ENCODE measurements at regions of chr19 and their contacts with region 1.

Region 1: DNA sequence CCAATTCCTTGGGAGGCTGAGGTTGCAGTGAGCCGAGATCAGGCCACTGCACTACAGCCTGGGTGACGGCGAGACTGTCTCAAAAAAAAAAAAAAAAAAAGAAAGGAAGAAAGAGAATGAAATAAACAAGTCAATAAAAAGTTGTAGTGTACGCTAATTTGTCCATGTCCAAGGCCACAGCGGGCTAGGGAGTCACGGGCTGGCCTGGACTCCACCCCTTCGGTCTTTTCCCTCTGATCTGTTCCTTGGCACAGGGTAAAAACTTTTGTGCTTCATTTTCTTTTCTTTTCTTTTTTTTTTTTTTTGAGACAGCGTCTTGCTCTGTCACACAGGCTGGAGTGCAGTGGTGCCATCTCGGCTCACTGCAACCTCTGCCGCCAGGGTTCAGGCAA is 19.4 kb upstream of the MKNK2 start:
- DNase-seq: peak; percentile 56
- H3K4me3 ChIP-seq: no peak overlapping the region
- H3K27ac ChIP-seq: peak overlapping the region; percentile 60
- H3K4me1 ChIP-seq: peaks cover 8% of the 10 kb centered on the region
- H3K27me3 ChIP-seq: no peaks in the 10 kb centered on the region
- CTCF ChIP-seq: no peak

Region 2: GRCh38 chr19:1864481-1865175 is 205.8 kb before region 1 on chr19:
- intact Hi-C with region 1: no loop called
- DNase-seq: peak; percentile 75
- H3K4me3 ChIP-seq: peak overlapping the region; percentile 72
- H3K27ac ChIP-seq: peak overlapping the region; percentile 91
- H3K4me1 ChIP-seq: peaks cover 21% of the 10 kb centered on the region
- H3K27me3 ChIP-seq: no peaks in the 10 kb centered on the region
- CTCF ChIP-seq: peak; percentile 90

Region 3: DNA sequence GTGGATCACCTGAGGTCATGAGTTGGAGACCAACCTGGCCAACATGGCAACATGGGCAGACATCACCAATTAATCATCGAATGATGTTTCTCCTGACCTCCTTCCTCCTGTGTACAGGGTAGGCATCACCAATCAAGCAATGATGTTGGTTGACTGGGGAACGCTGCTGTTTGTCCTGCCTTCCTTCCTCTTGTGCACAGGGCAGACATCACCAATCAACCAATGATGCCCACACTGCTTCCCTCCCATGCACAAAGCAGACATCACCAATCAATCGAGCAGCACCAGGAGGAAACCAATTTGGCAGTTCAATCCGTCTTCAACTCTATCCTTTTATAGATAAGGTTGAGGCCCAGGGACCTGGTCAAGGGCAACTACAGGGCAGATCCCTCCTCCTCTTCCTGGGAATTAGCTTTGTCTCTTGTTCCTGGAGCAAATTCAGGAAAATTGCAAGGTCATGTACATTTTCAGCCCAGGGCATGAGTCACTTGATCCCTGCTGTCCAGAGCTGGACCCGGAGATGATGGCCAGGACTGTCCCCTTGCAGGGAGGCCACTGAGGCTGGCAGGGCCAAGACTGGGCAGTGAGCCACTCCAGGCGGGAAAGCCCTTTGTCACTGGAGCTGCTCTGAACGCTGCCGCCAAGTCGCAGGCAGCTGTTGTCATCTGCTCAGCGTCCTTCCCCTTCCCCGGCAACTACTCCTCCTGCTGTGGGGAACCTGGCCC is 134.8 kb before region 1 on chr19:
- intact Hi-C with region 1: loop called (anchors 10 kb)
- DNase-seq: no peak
- H3K4me3 ChIP-seq: no peak overlapping the region
- H3K27ac ChIP-seq: no peak overlapping the region
- H3K4me1 ChIP-seq: peaks cover 4% of the 10 kb centered on the region
- H3K27me3 ChIP-seq: no peaks in the 10 kb centered on the region
- CTCF ChIP-seq: no peak

Measured in colonic mucosa (tissue), 4 donors.